Heart right ventricle (tissue), 16 donors: ENCODE measurements at regions of chr19 and their contacts with region 1.

Region 1: DNA sequence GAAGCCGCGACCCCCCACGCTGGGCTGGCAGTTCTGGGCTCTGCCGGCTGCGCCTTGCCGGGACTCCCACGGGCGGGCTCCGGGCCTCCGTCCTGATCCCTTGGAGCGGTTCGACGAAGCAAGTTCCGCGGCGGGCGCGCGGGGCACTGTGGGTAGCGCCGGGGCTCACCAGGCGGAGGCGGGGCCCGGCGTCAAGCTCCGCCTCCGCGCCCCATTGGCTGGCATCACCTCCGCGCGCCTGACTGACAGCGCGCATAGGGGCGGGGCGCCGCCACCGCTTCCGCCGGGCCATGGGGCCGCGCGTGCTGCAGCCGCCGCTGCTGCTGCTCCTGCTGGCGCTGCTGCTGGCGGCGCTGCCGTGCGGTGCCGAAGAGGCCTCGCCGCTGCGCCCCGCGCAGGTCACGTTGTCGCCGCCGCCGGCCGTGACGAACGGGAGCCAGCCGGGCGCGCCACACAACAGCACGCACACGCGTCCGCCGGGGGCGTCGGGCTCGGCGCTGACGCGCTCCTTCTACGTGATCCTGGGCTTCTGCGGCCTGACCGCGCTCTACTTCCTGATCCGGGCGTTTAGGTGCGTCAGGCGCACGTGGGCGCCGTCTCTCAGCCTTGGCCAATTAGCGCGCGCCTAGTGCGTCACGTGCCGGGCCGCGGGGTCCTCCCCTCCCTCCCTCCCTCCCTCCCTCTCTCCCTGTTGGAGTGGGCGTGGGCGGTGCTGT is at the start of gene FAM174C:
- DNase-seq: peak; percentile 95 to 96
- ATAC-seq: peak; percentile 68 to 93 (median 78)
- H3K4me3 ChIP-seq: peak within 1 kb of the TSS; percentile 42 to 91 (median 70)
- H3K27ac ChIP-seq: peak within 1 kb of the TSS; percentile 89 to 100 (median 98)
- H3K4me1 ChIP-seq: peaks cover 43 to 67% (median 63%) of the 10 kb centered on the region in 9 donors
- H3K27me3 ChIP-seq: no peaks in the 10 kb centered on the region
- CTCF ChIP-seq: no peak
- total RNA-seq, gene FAM174C: 8.2 to 19.0 (median 12.7) TPM

Region 2: GRCh38 chr19:1355568-1356507 is 80.4 kb after region 1 on chr19:
- intact Hi-C with region 1: loop called in 4 of 10 experiments (anchors 5 to 10 kb)
- DNase-seq: no peak
- ATAC-seq: peak in 2 of 8 donors; percentile 3 to 8
- H3K4me3 ChIP-seq: peak overlapping the region in 9 of 10 donors; percentile 69 to 93 (median 88)
- H3K27ac ChIP-seq: peak overlapping the region in 8 of 10 donors; percentile 32 to 99 (median 77)
- H3K4me1 ChIP-seq: peaks cover 4 to 30% (median 21%) of the 10 kb centered on the region in 9 donors
- H3K27me3 ChIP-seq: no peaks in the 10 kb centered on the region
- CTCF ChIP-seq: no peak

Region 3: DNA sequence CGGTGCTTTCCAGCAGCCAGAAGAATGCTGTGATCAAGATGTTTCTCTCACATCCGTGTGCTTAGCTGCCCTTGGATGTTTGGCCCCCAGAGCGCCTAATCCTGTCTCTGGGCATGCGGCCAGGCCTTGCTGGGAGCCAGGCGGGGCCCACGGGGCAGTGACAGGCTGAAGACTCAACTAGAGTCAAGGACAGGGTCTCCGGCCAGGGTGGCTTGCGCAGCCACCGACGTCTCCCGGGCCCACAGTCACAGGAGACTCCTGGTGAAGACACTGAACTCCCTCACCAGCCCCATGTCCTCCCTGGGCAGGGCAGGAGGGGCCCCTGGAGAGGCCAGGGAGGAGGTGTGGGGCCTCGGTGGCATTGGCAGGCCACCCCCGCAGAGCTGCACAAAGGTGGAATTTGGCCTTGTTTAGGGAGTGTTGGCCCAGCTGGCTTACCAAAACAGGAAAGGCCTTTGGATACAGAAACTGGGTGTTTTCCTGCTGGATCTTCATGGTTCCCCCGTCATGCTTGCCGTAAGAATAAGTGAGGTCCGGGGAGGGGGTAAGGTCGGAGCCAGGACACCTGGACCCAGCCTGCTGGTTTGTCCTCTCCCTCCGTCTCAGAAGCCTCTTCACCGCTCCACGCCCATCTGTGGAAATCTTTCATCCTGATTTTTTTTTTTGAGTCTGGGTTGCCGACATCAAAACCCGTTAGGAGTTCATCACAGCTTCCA is 98.3 kb after region 1 on chr19:
- intact Hi-C with region 1: loop called in 3 of 10 experiments (anchors 10 kb)
- DNase-seq: peak; percentile 75 to 86
- ATAC-seq: peak; percentile 72 to 90 (median 80)
- H3K4me3 ChIP-seq: no peak overlapping the region
- H3K27ac ChIP-seq: peak overlapping the region; percentile 68 to 92 (median 84)
- H3K4me1 ChIP-seq: peaks cover 9 to 24% (median 16%) of the 10 kb centered on the region in 9 donors
- H3K27me3 ChIP-seq: no peaks in the 10 kb centered on the region
- CTCF ChIP-seq: no peak

Region 4: DNA sequence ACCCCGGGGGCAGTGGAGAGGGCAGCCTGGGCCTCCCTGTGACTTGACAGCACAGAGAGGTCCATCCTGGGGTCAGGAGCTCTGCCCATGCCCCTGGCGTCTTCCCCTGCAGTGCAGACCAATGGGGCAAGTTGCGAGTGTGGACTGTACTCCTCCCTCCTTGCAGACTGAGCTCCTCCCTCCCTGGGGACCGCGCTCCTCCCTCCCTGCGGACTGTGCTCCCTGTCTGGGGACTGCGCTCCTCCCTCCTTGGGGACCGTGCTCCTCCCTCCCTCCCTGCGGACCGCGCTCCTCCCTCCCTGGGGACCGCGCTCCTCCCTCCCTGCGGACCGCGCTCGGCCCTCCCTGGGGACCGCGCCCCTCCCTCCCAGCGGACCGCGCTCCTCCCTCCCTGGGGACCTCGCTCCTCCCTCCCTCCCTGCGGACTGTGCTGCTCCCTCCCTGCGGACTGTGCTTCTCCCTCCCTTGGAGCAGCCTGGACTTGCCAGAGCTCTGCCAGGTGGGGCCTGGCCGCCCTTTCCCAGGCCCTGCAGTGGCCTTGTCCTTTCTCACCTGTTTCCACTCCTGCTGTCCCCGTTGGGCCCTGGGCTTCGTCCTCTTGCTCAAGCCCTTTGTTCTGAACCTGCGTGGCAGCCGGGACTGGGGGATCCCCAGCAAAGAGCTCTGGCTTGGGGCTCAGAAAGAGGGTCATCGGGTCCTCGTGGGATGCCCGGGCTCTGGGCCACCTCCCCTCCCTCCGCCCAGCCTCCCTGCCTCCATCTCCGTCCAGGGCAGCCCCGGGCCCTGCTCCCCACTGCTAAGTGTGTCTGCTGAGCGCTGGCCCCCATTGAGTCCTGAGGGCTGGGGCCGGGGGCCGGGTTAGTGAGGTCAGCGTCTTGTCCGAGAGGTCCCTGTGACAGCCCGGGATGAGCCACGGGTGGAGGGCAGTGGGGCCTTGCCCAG is 119.1 kb after region 1 on chr19:
- intact Hi-C with region 1: loop called in 1 of 10 experiments (anchors 5 kb)
- DNase-seq: no peak
- ATAC-seq: peak in 4 of 8 donors; percentile 4 to 32 (median 12)
- H3K4me3 ChIP-seq: no peak overlapping the region
- H3K27ac ChIP-seq: no peak overlapping the region
- H3K4me1 ChIP-seq: peaks cover 10 to 29% (median 19%) of the 10 kb centered on the region in 9 donors
- H3K27me3 ChIP-seq: no peaks in the 10 kb centered on the region
- CTCF ChIP-seq: no peak

Region 5: DNA sequence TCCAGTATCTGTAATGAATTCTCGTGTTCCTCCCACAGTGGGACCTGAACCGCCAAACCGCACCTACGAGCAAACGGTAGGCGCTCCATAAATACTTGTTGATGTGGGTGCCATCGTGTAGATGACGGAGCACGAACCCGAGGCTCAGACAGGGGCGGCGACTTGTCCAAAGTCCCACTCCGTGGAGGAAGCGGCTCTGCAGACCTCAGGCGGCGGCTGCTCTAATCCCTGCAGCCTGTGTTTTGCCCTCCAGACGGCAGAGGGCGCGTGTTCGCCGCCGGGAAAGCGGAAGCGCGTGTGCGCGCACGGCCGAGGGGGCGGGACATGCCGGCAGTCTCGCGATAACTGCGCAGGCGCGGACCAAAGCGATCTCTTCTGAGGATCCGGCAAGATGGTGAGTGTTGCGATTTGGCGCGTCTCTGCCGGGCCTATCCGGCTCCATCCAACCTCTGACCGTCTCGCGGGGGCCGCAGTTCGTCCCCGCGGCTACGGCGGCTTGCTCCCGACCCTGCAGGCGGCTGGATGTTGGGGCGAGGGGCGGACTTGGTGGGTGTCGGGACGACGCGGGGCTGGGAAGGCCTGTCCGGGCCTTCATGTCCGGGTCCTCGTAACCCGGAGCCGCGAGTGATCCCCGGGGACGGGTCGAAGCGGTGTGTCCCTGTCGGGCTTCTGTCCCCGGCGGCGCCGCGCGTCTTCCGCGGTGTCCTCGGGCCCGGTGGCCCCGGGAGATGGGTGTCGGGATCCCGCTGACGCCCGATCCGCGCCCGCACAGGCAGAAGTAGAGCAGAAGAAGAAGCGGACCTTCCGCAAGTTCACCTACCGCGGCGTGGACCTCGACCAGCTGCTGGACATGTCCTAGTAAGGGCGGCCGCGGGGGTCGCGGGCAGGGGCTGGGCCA is 162.9 kb after region 1 on chr19 and contains the start of gene RPS15:
- intact Hi-C with region 1: loop called in 1 of 10 experiments (anchors 5 kb)
- DNase-seq: peak; percentile 94 to 97
- ATAC-seq: peak; percentile 91 to 96 (median 94)
- H3K4me3 ChIP-seq: peak within 1 kb of the TSS; percentile 63 to 99 (median 86)
- H3K27ac ChIP-seq: peak within 1 kb of the TSS; percentile 75 to 94 (median 86)
- H3K4me1 ChIP-seq: peaks cover 5 to 30% (median 25%) of the 10 kb centered on the region in 9 donors
- H3K27me3 ChIP-seq: no peaks in the 10 kb centered on the region
- CTCF ChIP-seq: peak; percentile 90 to 99 (median 96)
- total RNA-seq, gene RPS15: 480 to 720 (median 539) TPM

Region 6: DNA sequence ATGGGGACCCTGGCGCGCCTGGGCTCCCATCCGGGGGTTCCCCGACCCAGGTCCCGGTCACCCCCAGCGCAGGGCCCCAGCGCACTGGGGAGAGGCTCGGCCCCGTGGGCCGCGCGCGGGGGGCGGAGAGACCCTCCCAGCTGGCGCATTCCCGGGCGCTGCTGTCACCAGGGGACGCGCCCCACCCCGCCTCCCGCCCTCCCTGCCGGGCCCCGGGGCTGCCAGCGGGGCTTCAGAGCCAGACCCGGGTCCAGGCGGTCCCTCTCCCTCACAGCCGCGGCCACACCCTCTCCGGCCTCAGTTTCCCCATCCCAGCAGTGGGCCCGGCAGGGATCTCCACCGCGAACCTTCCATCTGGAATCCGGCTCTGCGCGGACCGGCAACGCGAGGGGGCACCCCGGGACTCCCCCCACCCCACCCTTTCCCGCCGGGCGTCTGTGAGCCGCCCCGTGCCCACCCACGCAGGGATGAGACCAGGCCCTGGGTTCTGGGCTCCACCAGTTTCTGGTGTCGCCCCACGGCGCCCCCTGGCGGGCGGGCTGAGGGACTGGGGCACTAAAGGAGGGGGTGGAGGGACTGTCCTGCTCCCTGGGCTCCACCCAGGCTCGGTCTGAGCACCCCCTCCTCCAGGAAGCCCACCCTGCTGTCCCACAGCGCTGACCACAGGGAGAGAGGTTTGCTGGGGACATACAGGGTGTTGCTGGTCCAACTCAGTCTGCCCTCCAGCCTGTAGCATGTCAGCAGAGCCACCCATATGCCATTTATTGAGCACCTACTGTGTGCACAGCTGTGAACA is 238.3 kb after region 1 on chr19:
- intact Hi-C with region 1: loop called in 2 of 10 experiments (anchors 5 to 10 kb)
- DNase-seq: peak in 1 of 2 donors; percentile 60
- ATAC-seq: peak; percentile 34 to 63 (median 49)
- H3K4me3 ChIP-seq: peak overlapping the region; percentile 43 to 74 (median 63)
- H3K27ac ChIP-seq: peak overlapping the region; percentile 77 to 97 (median 90)
- H3K4me1 ChIP-seq: peaks cover 7 to 49% (median 17%) of the 10 kb centered on the region in 9 donors
- H3K27me3 ChIP-seq: peaks cover 0 to 58% (median 17%) of the 10 kb centered on the region in 7 donors
- CTCF ChIP-seq: peak; percentile 37 to 69 (median 63)